ENCODE measurements at regions of chr16 and their contacts with region 1.

Region 1: GRCh38 chr16:30657866-30658730 is at the start of gene FBRS:
- DNase-seq: peak; percentile 100
- H3K4me3 Mint-ChIP-seq: peak within 1 kb of the TSS; percentile 94
- H3K27ac Mint-ChIP-seq: peak within 1 kb of the TSS; percentile 100
- H3K4me1 Mint-ChIP-seq: peaks cover 38% of the 10 kb centered on the region
- H3K27me3 Mint-ChIP-seq: no peaks in the 10 kb centered on the region
- total RNA-seq, gene FBRS: 121 and 124 TPM in 2 replicates

Region 2: GRCh38 chr16:29995911-29996772 is 662.0 kb before region 1 on chr16 and contains the start of gene INO80E:
- intact Hi-C with region 1: loop called (anchors 10 kb)
- DNase-seq: peak; percentile 100
- H3K4me3 Mint-ChIP-seq: peak within 1 kb of the TSS; percentile 95
- H3K27ac Mint-ChIP-seq: peak within 1 kb of the TSS; percentile 98
- H3K4me1 Mint-ChIP-seq: peaks cover 26% of the 10 kb centered on the region
- H3K27me3 Mint-ChIP-seq: no peaks in the 10 kb centered on the region
- total RNA-seq, gene INO80E: 129 and 133 TPM in 2 replicates

Region 3: GRCh38 chr16:30417529-30418349 is 240.4 kb before region 1 on chr16:
- intact Hi-C with region 1: loop called (anchors 5 kb)
- DNase-seq: peak; percentile 97
- H3K4me3 Mint-ChIP-seq: peak overlapping the region; percentile 65
- H3K27ac Mint-ChIP-seq: peak overlapping the region; percentile 72
- H3K4me1 Mint-ChIP-seq: peaks cover 31% of the 10 kb centered on the region
- H3K27me3 Mint-ChIP-seq: no peaks in the 10 kb centered on the region

Region 4: GRCh38 chr16:30557957-30558788 is 99.9 kb before region 1 on chr16 and contains the start of gene ZNF764:
- intact Hi-C with region 1: loop called (anchors 1 kb)
- DNase-seq: peak; percentile 99
- H3K4me3 Mint-ChIP-seq: peak within 1 kb of the TSS; percentile 91
- H3K27ac Mint-ChIP-seq: peak within 1 kb of the TSS; percentile 91
- H3K4me1 Mint-ChIP-seq: peaks cover 41% of the 10 kb centered on the region
- H3K27me3 Mint-ChIP-seq: no peaks in the 10 kb centered on the region
- total RNA-seq, gene ZNF764: 13.9 and 14.9 TPM in 2 replicates

Region 5: DNA sequence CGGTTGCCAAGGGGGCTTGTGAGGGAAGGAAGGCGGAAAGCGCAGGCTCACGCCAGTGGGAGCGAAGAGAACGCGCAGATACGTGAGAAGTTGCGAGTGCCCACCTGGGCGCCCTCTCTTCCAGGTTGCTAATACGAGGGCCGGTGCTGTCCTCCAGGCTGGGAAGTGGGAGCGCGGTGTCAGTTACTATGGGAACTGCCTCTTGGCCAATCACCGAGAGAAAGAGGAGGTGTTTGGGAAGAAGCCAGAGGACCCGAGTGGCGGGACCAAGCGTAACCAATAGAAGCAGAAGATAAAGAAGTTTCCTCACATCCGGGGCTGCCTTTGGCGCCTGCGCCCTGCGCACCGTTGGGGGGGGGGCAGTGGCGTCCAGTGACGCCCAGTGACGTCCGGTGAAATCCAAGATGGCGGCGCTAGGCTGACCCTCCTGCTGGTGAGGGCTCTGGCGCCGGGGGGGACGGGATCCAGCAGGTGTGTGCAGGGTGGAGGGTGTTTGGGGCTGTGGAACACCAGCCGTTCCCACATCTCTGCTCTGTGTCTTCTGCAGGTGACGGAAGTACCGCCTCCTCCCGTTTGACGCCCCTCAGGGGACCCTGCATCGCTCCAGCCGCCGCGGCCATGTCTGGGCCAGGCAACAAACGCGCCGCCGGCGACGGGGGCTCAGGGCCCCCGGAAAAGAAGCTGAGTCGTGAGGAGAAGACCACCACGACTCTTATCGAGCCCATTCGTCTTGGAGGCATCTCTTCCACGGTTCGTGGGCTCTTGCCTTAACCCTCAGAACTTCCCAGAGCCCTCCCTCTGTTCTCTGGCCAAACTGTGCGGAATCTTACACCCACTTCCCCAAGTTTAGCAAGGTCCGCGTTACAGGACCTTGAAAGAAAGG is 104.1 kb after region 1 on chr16 and contains the starts of genes CFAP119 and RNF40:
- intact Hi-C with region 1: loop called (anchors 5 kb)
- DNase-seq: peak; percentile 99
- H3K4me3 Mint-ChIP-seq: peak within 1 kb of the TSS; percentile 97
- H3K27ac Mint-ChIP-seq: peak within 1 kb of the TSS; percentile 83
- H3K4me1 Mint-ChIP-seq: peaks cover 22% of the 10 kb centered on the region
- H3K27me3 Mint-ChIP-seq: no peaks in the 10 kb centered on the region
- total RNA-seq, gene CFAP119: 4.0 and 4.2 TPM in 2 replicates
- total RNA-seq, gene RNF40: 95.4 and 100 TPM in 2 replicates

Region 6: GRCh38 chr16:31873556-31874365 is 1215.7 kb after region 1 on chr16 and contains the start of gene ZNF267:
- intact Hi-C with region 1: loop called (anchors 10 kb)
- DNase-seq: peak; percentile 98
- H3K4me3 Mint-ChIP-seq: peak within 1 kb of the TSS; percentile 90
- H3K27ac Mint-ChIP-seq: peak within 1 kb of the TSS; percentile 94
- H3K4me1 Mint-ChIP-seq: peaks cover 66% of the 10 kb centered on the region
- H3K27me3 Mint-ChIP-seq: no peaks in the 10 kb centered on the region
- total RNA-seq, gene ZNF267: 77.7 and 78.3 TPM in 2 replicates

Measured in activated CD4-positive, alpha-beta T cell treated with anti-CD3 and anti-CD28 coated beads, Interleukin-2, amount 10 ng/mL, durations not matched to agents 24 days and 14 days (primary cell).